Activated naive CD4-positive, alpha-beta T cell treated with anti-CD3 and anti-CD28 coated beads for 36 hours (primary cell): ENCODE measurements at regions of chr10 and their contacts with region 1.

Region 1: DNA sequence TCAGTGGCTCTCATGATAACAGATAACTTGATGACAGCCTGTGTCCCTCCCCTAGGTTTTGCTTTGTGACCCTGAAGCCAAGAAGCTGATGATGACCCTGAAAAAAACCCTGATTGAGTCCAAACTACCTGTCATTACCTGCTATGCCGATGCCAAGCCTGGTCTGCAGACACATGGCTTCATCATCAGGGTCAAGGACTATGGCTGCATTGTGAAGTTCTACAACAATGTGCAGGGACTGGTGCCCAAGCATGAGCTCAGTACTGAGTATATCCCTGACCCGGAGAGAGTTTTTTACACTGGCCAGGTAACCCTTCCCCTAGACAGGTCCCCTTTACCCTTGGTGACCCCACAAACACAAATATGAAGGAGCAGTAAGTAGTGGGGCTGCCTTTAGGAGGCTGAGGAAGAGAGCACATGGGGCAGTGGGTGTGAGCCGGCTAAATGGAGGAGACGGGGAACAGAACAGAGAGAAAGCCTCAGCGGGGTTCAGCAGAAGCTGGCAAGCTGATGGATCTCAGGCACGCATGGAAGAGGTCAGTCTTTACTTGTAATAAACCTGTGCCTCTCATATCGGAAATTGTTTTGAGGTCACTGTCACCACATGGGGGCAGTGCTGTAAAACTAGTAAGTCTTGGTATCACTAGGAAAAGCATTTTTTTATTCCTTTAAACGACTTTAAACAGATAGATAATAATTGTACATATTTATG is 20.2 kb downstream of the PDCD11 start:
- DNase-seq: peak; percentile 75
- H3K4me3 Mint-ChIP-seq: no peak overlapping the region
- H3K27ac Mint-ChIP-seq: no peak overlapping the region
- H3K4me1 Mint-ChIP-seq: no peaks in the 10 kb centered on the region
- H3K27me3 Mint-ChIP-seq: no peaks in the 10 kb centered on the region

Region 2: DNA sequence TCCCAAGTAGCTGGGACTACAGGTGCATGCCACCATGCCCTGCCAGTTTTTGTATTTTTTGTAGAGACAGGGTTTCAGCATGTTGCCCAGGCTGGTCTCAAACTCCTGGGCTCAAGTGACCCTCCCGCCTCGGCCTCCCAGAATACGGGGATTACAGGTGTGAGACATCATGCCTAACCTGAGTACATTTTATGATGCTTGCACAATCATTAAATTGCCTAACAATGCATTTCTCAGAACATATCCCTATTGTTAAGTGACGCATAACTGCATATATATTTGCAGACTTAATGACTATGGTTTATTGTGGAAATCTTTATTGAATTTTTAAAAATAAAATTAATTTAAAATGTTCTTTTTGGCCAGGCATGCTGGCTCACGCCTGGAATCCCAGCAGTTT is 109.0 kb before region 1 on chr10:
- CTCF ChIA-PET with region 1: no interaction called
- intact Hi-C with region 1: no loop called
- DNase-seq: no peak
- H3K4me3 Mint-ChIP-seq: no peak overlapping the region
- H3K27ac Mint-ChIP-seq: no peak overlapping the region
- H3K4me1 Mint-ChIP-seq: no peaks in the 10 kb centered on the region
- H3K27me3 Mint-ChIP-seq: no peaks in the 10 kb centered on the region

Region 3: GRCh38 chr10:103481974-103482531 is 65.5 kb after region 1 on chr10:
- CTCF ChIA-PET with region 1: interaction called, 15 read pairs
- intact Hi-C with region 1: loop called (anchors 1 kb)
- DNase-seq: peak; percentile 41
- H3K4me3 Mint-ChIP-seq: no peak overlapping the region
- H3K27ac Mint-ChIP-seq: no peak overlapping the region
- H3K4me1 Mint-ChIP-seq: no peaks in the 10 kb centered on the region
- H3K27me3 Mint-ChIP-seq: no peaks in the 10 kb centered on the region

Region 4: DNA sequence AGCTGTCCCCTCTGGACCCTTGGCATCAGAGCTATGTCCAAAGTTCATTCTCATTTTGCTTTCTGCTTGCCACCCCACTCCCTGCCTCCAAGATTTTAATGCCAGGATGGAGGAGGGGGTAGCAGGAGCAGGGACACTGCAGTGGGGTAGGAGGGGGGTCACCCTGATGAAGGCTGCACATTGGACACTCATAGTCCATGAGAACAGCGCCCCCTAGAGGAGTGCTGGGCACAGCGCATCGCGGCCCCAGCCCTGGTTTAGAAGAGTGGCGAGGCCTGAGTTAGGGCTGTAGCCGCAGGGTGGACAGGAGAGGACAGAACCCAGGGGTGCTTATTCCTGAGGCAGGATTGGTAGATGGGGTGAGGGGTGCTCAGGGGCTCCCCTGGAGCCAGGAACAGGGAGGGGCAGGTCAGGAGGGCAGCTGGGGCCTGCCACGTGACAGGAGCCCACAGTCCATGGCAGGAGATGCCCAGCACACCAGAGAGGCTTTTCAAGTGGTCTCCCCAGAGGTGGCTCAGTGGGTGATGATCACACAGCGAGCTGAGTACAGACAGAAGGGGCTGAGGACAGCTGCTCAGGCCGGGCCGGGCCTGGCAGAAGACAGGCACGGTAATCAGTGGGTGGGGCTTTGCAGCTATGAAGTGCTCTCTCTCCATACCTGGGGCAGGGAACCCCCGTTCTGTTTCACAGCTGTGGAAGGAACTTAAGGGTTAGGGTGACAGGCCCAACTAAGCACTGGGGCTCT is 148.4 kb after region 1 on chr10:
- CTCF ChIA-PET with region 1: interaction called, 3 read pairs
- intact Hi-C with region 1: loop called (anchors 2 kb)
- DNase-seq: peak; percentile 74
- H3K4me3 Mint-ChIP-seq: no peak overlapping the region
- H3K27ac Mint-ChIP-seq: no peak overlapping the region
- H3K4me1 Mint-ChIP-seq: no peaks in the 10 kb centered on the region
- H3K27me3 Mint-ChIP-seq: peaks cover 2% of the 10 kb centered on the region

Region 5: DNA sequence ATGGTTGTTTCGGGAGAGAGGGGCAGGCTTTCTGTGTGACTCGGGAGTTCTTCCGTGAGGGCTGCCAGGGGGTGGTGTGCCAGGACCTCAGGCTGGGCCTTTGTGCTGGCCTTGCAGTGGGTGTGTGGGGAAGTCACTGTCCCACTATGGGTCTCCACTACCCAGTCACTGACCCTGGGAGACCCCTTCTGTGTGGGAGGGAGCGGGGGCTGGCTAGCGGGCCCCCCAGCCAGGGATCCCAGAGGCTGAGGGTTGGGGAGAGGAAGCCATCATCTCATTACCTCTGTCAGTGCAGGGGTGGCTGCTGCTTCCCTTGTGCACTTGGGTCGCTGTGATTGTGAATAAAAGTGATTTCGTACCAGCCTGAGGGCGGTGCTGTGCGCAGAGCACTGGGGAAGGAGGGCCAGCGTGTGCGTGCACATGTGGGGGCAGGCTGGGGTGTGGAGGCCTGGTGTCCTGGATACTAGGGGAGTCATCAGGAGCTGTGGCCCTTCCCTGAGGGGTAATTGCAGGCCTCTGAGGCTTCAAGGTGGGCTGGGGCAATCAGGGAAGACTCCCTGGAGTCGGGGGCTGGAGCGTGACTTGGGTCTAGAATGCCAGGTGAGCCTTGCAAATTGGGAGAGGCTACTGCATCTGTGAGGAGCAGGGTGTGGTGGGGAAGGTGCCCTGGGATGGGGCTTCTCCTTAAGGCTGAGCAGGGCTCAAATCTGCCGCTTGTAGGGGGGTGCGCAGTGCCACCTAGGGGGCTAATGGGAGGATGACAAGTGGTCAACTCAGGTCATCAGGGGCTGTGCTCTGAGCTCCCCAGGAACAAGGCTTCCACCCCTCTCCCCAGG is 175.8 kb after region 1 on chr10:
- CTCF ChIA-PET with region 1: interaction called, 5 read pairs
- intact Hi-C with region 1: loop called (anchors 2 kb)
- DNase-seq: peak; percentile 64
- H3K4me3 Mint-ChIP-seq: no peak overlapping the region
- H3K27ac Mint-ChIP-seq: no peak overlapping the region
- H3K4me1 Mint-ChIP-seq: no peaks in the 10 kb centered on the region
- H3K27me3 Mint-ChIP-seq: no peaks in the 10 kb centered on the region